Activated CD4-positive, alpha-beta memory T cell treated with anti-CD3 and anti-CD28 coated beads for 36 hours (primary cell): ENCODE measurements at regions of chr3 and their contacts with region 1.

Region 1: GRCh38 chr3:186882881-186883685 is 40.6 kb downstream of the ADIPOQ start:
- DNase-seq: peak; percentile 80
- H3K4me3 Mint-ChIP-seq: peak overlapping the region; percentile 59
- H3K27ac Mint-ChIP-seq: peak overlapping the region; percentile 90
- H3K4me1 Mint-ChIP-seq: peaks cover 63% of the 10 kb centered on the region
- H3K27me3 Mint-ChIP-seq: no peaks in the 10 kb centered on the region

Region 2: DNA sequence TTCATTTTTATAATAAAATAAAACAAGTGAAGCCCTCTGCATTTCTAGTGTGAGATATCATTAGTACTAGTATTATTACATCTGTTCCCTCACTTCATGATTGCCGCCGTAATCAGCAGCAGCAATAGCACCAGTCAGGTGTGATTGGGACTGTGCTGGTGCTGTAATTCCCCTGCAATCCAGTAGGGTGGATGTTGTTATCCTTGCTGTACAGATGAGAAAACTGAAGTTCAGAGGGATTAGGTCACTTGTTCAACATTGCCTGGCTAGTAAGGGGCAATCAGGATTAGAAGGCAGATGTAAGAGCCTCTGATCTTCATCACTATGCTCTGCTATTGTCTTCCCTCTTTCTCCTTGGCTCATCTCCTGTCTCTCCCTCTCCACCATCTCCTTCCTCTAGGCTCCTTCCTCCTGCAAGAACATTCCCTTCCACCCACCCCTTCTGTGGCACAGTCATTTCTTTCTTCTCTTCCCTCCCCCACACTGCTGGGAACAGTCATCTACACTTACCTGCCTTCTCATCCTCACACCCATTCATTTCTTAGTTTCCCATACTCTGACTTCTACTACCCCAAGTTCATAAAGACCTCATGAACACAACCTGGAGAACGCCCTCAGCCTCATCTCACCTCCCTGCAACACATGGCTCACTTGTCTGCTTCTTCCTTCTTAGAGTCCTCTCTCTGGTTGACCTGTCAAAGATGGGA is 368.6 kb before region 1 on chr3:
- CTCF ChIA-PET with region 1: no interaction called
- POLR2A ChIA-PET with region 1: no interaction called
- intact Hi-C with region 1: no loop called
- DNase-seq: peak; percentile 72
- H3K4me3 Mint-ChIP-seq: no peak overlapping the region
- H3K27ac Mint-ChIP-seq: peak overlapping the region; percentile 81
- H3K4me1 Mint-ChIP-seq: peaks cover 96% of the 10 kb centered on the region
- H3K27me3 Mint-ChIP-seq: no peaks in the 10 kb centered on the region

Region 3: DNA sequence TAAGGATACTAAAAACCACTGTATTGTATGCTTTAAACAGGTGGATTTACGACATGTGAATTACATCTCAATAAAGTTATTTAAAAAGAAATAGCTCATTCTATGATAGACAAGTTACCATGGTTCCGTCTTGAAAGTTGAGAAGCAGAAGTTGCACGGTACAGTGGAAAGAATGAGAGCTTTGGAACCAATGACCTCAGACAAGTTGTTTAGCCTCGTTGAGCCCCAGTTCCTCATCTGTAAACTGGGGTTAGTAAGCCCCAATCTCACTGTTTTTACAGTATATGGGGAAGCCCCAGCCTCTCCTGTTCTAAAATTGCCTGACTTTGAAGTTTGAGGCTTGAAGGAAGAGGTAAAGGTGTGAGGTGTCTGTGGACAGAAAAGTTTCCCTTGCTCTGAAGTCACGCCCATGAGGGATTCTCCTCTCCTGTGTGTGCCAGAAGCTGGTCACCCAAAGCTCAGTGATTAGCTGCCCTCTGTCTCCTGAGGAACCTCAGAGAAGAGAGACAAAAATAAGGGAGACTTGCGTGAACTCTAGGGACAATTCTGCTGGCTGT is 348.9 kb before region 1 on chr3:
- CTCF ChIA-PET with region 1: no interaction called
- POLR2A ChIA-PET with region 1: interaction called, 3 read pairs
- intact Hi-C with region 1: loop called (anchors 2 kb)
- DNase-seq: peak; percentile 70
- H3K4me3 Mint-ChIP-seq: peak overlapping the region; percentile 46
- H3K27ac Mint-ChIP-seq: peak overlapping the region; percentile 95
- H3K4me1 Mint-ChIP-seq: peaks cover 89% of the 10 kb centered on the region
- H3K27me3 Mint-ChIP-seq: no peaks in the 10 kb centered on the region

Region 4: GRCh38 chr3:186869253-186870100 is 13.6 kb before region 1 on chr3:
- CTCF ChIA-PET with region 1: interaction called, 5 read pairs
- POLR2A ChIA-PET with region 1: interaction called, 10 read pairs
- intact Hi-C with region 1: no loop called
- DNase-seq: peak; percentile 28
- H3K4me3 Mint-ChIP-seq: no peak overlapping the region
- H3K27ac Mint-ChIP-seq: peak overlapping the region; percentile 82
- H3K4me1 Mint-ChIP-seq: peaks cover 35% of the 10 kb centered on the region
- H3K27me3 Mint-ChIP-seq: no peaks in the 10 kb centered on the region

Region 5: DNA sequence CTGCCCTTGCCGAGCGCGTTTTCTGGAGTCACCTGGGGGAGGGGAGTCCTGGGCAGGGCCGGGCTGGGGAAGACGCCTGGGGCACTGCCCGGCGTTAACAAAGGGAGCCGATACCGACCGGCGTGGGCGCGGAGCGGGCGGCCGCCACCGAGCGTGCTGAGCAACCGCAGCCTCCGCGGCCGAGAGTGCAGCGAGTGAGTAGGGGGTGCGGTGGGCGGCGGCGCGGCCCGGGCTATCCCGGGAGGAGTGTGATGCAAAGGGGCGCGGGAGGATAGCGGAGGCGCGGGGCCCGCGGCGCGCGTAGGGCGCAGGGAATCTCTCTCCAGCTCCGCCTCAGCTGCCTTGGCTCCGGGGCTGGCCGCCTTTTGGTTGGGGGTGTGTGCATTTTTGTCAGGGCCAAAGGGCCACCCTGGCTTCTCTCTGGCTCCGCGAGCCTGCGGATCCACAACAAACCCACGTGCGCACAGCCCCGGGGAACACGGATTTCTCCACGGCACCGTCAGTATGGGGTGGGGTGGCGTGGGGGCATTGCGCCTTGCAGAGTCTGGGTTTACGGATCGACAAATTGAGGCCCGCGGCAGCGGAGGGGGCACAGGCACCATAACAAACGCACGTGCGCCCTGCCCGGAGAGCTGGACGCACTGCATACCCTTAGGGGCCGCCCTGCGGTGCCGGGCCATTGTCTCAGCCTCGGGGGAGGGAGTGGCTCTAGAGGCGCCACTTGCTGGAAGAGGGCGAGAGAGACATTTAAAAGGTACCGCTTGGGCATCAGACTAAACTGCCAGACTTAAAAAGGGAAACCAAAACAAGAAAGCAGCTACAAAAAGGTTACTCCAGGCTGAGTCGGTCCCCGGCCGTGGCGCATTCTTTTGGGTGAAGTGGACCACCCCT is 47.8 kb after region 1 on chr3:
- CTCF ChIA-PET with region 1: interaction called, 7 read pairs
- POLR2A ChIA-PET with region 1: interaction called, 17 read pairs
- intact Hi-C with region 1: loop called (anchors 1 kb)
- DNase-seq: peak; percentile 79
- H3K4me3 Mint-ChIP-seq: peak overlapping the region; percentile 88
- H3K27ac Mint-ChIP-seq: peak overlapping the region; percentile 97
- H3K4me1 Mint-ChIP-seq: peaks cover 38% of the 10 kb centered on the region
- H3K27me3 Mint-ChIP-seq: no peaks in the 10 kb centered on the region

Region 6: DNA sequence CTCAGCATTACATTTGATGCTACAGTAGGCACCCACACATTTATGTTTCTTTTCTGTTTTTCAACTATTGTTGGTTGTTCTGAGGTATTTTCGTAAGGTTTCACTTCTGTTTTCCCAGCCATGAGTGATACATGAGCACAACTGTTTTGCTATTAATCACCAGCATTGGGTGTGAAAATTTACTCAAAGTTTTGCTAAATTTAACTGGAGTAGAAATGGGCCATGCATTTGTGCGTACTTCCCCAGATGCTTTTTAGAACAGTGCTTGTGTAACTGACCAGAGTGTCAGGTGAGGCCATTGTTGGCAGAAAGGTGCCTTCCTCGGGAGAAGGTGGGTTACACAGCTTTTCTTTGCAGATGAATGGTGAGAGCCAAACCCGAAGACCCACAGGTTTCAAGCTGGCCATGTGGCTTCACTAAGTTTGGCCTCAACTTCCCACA is 117.6 kb after region 1 on chr3:
- CTCF ChIA-PET with region 1: no interaction called
- POLR2A ChIA-PET with region 1: no interaction called
- intact Hi-C with region 1: loop called (anchors 1 kb)
- DNase-seq: peak; percentile 63
- H3K4me3 Mint-ChIP-seq: peak overlapping the region; percentile 5
- H3K27ac Mint-ChIP-seq: peak overlapping the region; percentile 87
- H3K4me1 Mint-ChIP-seq: peaks cover 76% of the 10 kb centered on the region
- H3K27me3 Mint-ChIP-seq: no peaks in the 10 kb centered on the region

Region 7: GRCh38 chr3:187130346-187131066 is 247.4 kb after region 1 on chr3:
- CTCF ChIA-PET with region 1: no interaction called
- POLR2A ChIA-PET with region 1: no interaction called
- intact Hi-C with region 1: loop called (anchors 1 kb)
- DNase-seq: peak; percentile 71
- H3K4me3 Mint-ChIP-seq: peak overlapping the region; percentile 50
- H3K27ac Mint-ChIP-seq: peak overlapping the region; percentile 96
- H3K4me1 Mint-ChIP-seq: peaks cover 34% of the 10 kb centered on the region
- H3K27me3 Mint-ChIP-seq: no peaks in the 10 kb centered on the region